ENCODE measurements at regions of chr2 and their contacts with region 1.

Region 1: GRCh38 chr2:70647873-70648481 is 94.4 kb upstream of the TGFA start:
- DNase-seq: peak; percentile 53
- H3K4me3 Mint-ChIP-seq: no peak overlapping the region
- H3K27ac Mint-ChIP-seq: no peak overlapping the region
- H3K4me1 Mint-ChIP-seq: no peaks in the 10 kb centered on the region
- H3K27me3 Mint-ChIP-seq: peaks cover 18% of the 10 kb centered on the region

Region 2: GRCh38 chr2:70340921-70341765 is 306.8 kb before region 1 on chr2:
- intact Hi-C with region 1: loop called (anchors 1 kb)
- DNase-seq: peak; percentile 16
- H3K4me3 Mint-ChIP-seq: no peak overlapping the region
- H3K27ac Mint-ChIP-seq: no peak overlapping the region
- H3K4me1 Mint-ChIP-seq: no peaks in the 10 kb centered on the region
- H3K27me3 Mint-ChIP-seq: no peaks in the 10 kb centered on the region

Region 3: GRCh38 chr2:70509553-70509952 is 138.4 kb before region 1 on chr2:
- intact Hi-C with region 1: no loop called
- DNase-seq: no peak
- H3K4me3 Mint-ChIP-seq: no peak overlapping the region
- H3K27ac Mint-ChIP-seq: no peak overlapping the region
- H3K4me1 Mint-ChIP-seq: no peaks in the 10 kb centered on the region
- H3K27me3 Mint-ChIP-seq: no peaks in the 10 kb centered on the region

Region 4: GRCh38 chr2:70553584-70554337 is 94.2 kb before region 1 on chr2 and contains the start of gene TGFA:
- intact Hi-C with region 1: loop called (anchors 1 kb)
- DNase-seq: peak; percentile 46
- H3K4me3 Mint-ChIP-seq: peak within 1 kb of the TSS; percentile 82
- H3K27ac Mint-ChIP-seq: no peak within 1 kb of the TSS
- H3K4me1 Mint-ChIP-seq: peaks cover 24% of the 10 kb centered on the region
- H3K27me3 Mint-ChIP-seq: peaks cover 45% of the 10 kb centered on the region
- total RNA-seq, gene TGFA: not detected in 2 replicates

Region 5: GRCh38 chr2:70616168-70616694 is 31.7 kb before region 1 on chr2:
- intact Hi-C with region 1: loop called (anchors 1 kb)
- DNase-seq: no peak
- H3K4me3 Mint-ChIP-seq: no peak overlapping the region
- H3K27ac Mint-ChIP-seq: no peak overlapping the region
- H3K4me1 Mint-ChIP-seq: peaks cover 6% of the 10 kb centered on the region
- H3K27me3 Mint-ChIP-seq: peaks cover 11% of the 10 kb centered on the region

Region 6: DNA sequence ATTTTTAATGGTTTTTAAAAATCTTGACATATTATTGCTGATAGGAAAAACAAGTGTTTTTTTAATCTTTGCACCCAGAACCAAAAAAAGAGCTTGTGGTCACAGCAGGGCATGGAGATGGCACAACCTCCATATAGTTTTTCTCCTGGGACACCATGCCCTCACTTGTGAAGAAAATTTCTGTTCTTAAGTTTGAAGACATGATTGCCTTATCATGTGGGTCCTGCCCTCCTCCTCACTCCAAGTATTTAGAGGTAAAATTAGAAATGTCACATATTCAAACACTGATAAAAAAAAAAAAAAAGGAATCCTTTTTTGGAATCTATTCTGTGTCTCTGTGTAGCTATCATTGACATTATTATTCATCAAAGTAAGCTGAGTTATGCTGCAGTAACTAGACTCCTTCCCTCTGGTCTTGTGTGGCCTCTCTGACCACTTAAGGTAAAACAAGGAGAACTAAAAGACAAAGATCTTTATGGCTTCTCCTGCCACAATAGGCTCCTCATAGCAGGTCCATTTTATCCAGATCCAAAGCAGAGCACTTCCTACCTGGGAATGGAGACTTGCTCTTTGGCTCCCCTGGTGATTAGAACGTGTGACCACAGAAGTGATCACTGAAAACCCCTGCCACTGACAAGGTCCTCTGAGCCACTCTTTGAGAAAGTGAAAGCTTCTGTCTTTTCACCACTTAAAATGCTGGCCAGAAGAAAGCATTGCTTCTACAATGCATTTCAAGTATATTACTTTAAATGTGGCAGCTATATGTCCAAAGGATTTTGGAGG is 100.2 kb after region 1 on chr2:
- intact Hi-C with region 1: no loop called
- DNase-seq: no peak
- H3K4me3 Mint-ChIP-seq: no peak overlapping the region
- H3K27ac Mint-ChIP-seq: no peak overlapping the region
- H3K4me1 Mint-ChIP-seq: no peaks in the 10 kb centered on the region
- H3K27me3 Mint-ChIP-seq: peaks cover 3% of the 10 kb centered on the region

Measured in activated T-helper 1 cell treated with anti-CD3 and anti-CD28 coated beads, Interleukin-12 subunit alpha, Interleukin-12 subunit beta, Interleukin-2, Interleukin-4 antibody, amounts not matched to agents 30 ng/mL and 10 ng/mL and 1 ng/mL, durations not matched to agents 14 hours and 24 hours and 36 hours (primary cell).